Activated CD8-positive, alpha-beta memory T cell treated with anti-CD3 and anti-CD28 coated beads, Interleukin-2, amount 10 ng/mL, durations not matched to agents 7 days and 5 days (primary cell): ENCODE measurements at regions of chr14 and their contacts with region 1.

Region 1: DNA sequence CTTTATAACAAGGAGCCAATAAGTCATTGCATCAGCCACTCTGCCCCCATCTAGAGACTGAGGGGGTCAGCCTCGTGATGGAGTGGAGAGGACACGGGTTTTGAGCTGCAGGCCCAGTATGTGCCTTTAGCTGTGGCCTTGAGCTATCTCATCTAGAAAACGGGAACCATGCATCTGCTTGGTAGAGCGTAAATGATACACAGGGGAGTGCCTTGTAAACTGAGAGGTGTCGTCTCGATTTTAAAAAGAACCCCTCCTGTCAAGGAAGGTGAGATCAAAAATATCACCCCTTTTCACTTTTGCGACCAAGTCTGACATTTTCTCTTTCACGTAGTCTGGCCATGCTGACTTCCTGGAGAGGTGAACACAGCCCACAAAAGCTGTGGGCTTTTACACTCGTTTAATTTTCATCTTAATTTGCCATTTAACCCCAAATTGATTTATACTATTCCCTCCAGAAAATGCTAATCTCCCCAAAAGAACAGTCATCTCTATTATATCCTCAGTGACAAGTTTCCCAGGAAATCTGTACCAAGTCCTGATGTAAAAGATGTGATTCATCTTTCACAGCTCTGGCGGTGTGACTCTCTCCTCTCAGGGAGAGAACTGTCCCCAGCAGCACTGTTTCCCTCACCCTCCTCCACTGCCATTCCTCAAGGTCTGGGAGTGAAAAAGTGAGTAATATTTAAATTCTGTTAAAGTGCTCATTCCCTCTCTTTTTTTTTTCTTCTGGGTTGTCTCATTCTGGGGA is 30.6 kb downstream of the VCPKMT start:
- DNase-seq: peak; percentile 56
- ATAC-seq: no peak
- H3K4me3 Mint-ChIP-seq: peak overlapping the region; percentile 52
- H3K27ac Mint-ChIP-seq: peak overlapping the region; percentile 95
- H3K4me1 Mint-ChIP-seq: peaks cover 91% of the 10 kb centered on the region
- H3K27me3 Mint-ChIP-seq: no peaks in the 10 kb centered on the region

Region 2: GRCh38 chr14:50099335-50099734 is 13.6 kb after region 1 on chr14:
- CTCF ChIA-PET with region 1: interaction called, 19 read pairs
- DNase-seq: no peak
- ATAC-seq: no peak
- H3K4me3 Mint-ChIP-seq: no peak overlapping the region
- H3K27ac Mint-ChIP-seq: no peak overlapping the region
- H3K4me1 Mint-ChIP-seq: peaks cover 55% of the 10 kb centered on the region
- H3K27me3 Mint-ChIP-seq: peaks cover 5% of the 10 kb centered on the region

Region 3: DNA sequence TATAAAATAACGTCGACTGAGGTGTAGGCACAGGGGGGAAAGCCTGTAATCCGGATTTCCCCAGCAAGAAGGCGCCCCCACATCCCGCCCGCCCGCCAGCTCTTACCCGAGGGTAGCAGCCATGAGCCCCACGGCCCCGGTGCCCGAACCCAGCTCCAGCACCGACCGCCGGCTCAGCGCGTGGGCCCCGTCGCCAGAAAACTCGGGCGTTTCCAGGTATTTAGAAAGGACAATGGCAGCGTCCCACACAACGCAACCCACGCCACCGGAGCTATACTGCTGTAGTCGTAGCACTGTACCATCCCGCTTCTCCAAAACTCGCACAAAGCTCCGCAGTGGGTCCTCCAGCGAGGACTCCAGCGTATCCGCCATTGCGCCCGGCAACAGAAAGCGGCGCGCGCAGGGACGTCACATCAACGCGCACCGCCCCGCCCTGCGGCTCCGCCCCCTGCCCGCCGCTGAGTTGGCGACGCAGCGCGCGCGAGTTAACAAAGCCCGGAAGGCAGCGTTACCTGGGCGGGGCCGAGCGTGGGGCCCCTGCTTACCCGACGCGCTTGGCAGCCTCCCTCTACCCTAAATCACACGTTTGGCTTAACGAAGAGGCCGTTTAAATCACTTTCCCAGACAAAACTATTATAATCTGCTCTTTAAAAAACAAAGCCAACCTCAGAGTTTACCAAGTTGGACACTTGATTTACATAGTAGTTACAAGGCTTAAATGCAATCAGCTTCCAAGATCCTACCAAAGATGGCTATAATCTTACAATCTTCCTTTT is 30.6 kb after region 1 on chr14 and contains the start of gene VCPKMT:
- CTCF ChIA-PET with region 1: no interaction called
- DNase-seq: peak; percentile 96
- ATAC-seq: peak; percentile 99
- H3K4me3 Mint-ChIP-seq: peak within 1 kb of the TSS; percentile 97
- H3K27ac Mint-ChIP-seq: peak within 1 kb of the TSS; percentile 98
- H3K4me1 Mint-ChIP-seq: peaks cover 32% of the 10 kb centered on the region
- H3K27me3 Mint-ChIP-seq: no peaks in the 10 kb centered on the region
- total RNA-seq, gene VCPKMT: 12.0 to 14.5 TPM